Naive thymus-derived CD4-positive, alpha-beta T cell (primary cell): ENCODE measurements at regions of chr15 and their contacts with region 1.

Region 1: DNA sequence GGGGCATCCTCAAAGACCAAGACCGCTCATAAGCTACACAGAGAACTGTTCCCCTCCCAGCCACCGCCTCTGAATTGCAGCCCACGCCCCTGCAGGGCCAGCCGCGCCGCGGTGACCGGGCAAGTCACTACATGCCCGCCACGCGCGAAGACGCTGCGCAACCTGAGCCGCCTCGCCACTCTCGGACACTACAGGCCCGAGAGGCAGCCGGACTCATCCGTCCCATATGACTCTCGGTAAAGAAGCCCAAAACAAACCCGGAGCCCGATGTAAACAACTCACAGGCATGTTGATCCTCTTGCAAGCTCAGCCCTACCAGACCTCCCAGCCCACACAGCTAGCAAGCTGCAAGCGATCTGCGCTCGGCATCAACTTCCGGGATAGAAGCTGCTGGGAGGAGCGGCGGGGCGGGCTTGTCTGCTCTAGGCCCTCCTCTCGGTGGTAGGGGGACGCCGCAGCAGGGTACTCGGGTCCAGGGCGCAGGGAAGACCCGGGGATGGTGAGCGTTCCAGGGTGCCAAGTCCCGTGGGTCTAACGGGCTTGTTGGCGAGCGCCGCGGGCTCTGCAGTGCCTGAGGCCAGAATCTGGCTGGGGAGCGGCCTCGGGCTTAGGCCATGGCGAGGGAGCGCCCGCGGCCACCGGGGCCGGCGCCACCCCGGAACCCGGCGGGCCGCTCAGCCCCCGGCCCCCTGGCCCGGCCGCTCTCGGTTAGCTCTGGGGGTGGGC is at the start of gene RPS27L:
- DNase-seq: peak; percentile 72 to 89 (median 84)
- ATAC-seq: peak; percentile 97
- H3K4me3 ChIP-seq: peak within 1 kb of the TSS; percentile 100
- H3K4me3 Mint-ChIP-seq: peak within 1 kb of the TSS; percentile 89 to 100 (median 98)
- H3K27ac ChIP-seq: peak within 1 kb of the TSS; percentile 86
- H3K27ac Mint-ChIP-seq: peak within 1 kb of the TSS; percentile 93 to 99 (median 97)
- H3K4me1 ChIP-seq: peaks cover 10 to 11% of the 10 kb centered on the region in 2 donors
- H3K4me1 Mint-ChIP-seq: peaks cover 4 to 37% (median 25%) of the 10 kb centered on the region in 7 donors
- H3K27me3 ChIP-seq: no peaks in the 10 kb centered on the region
- H3K27me3 Mint-ChIP-seq: no peaks in the 10 kb centered on the region
- total RNA-seq, gene RPS27L: 38.7 to 248 (median 111) TPM

Region 2: DNA sequence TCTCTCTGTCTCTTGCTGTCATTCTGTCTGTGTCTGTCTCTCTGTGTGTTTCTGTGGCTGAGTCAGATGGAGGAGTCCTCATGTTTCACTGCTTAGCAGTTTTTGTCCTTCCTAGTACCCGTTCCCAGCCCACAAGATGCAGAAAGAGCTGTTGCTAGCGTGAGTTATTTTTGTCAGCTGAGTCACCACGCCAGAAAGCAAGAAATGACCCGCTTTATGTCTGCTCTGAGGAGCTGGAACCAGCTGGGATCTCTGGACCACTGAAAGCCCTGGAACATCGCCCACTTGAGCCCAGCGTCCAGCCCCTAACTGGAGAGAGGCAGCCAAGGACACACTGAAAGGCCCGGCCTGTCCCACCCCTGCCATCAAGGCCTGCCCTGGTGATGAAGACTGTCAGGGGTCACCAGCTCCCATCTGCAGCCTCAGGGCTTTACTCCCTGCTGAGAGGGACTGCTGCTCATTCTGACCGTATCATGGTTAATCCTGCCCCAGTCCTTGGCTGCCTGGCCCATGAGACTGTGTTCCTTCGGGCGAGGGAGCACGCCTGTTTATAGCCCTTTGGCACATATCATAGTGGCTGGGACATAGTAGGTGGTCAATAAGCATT is 216.4 kb before region 1 on chr15:
- CTCF ChIA-PET with region 1: no interaction called
- POLR2A ChIA-PET with region 1: no interaction called
- intact Hi-C with region 1: no loop called
- DNase-seq: no peak
- ATAC-seq: peak; percentile 31
- H3K4me3 ChIP-seq: no peak overlapping the region
- H3K4me3 Mint-ChIP-seq: no peak overlapping the region
- H3K27ac ChIP-seq: no peak overlapping the region
- H3K27ac Mint-ChIP-seq: no peak overlapping the region
- H3K4me1 ChIP-seq: no peaks in the 10 kb centered on the region
- H3K4me1 Mint-ChIP-seq: peaks cover 0 to 2% (median 0%) of the 10 kb centered on the region in 7 donors
- H3K27me3 ChIP-seq: no peaks in the 10 kb centered on the region
- H3K27me3 Mint-ChIP-seq: peaks cover 11 to 53% (median 31%) of the 10 kb centered on the region in 5 donors

Region 3: GRCh38 chr15:63006032-63006878 is 151.0 kb before region 1 on chr15:
- CTCF ChIA-PET with region 1: no interaction called
- POLR2A ChIA-PET with region 1: no interaction called
- intact Hi-C with region 1: no loop called
- DNase-seq: no peak
- ATAC-seq: no peak
- H3K4me3 ChIP-seq: no peak overlapping the region
- H3K4me3 Mint-ChIP-seq: no peak overlapping the region
- H3K27ac ChIP-seq: no peak overlapping the region
- H3K27ac Mint-ChIP-seq: peak overlapping the region in 1 of 9 donors; percentile 12
- H3K4me1 ChIP-seq: no peaks in the 10 kb centered on the region
- H3K4me1 Mint-ChIP-seq: no peaks in the 10 kb centered on the region
- H3K27me3 ChIP-seq: no peaks in the 10 kb centered on the region
- H3K27me3 Mint-ChIP-seq: peaks cover 0 to 7% (median 0%) of the 10 kb centered on the region in 5 donors

Region 4: DNA sequence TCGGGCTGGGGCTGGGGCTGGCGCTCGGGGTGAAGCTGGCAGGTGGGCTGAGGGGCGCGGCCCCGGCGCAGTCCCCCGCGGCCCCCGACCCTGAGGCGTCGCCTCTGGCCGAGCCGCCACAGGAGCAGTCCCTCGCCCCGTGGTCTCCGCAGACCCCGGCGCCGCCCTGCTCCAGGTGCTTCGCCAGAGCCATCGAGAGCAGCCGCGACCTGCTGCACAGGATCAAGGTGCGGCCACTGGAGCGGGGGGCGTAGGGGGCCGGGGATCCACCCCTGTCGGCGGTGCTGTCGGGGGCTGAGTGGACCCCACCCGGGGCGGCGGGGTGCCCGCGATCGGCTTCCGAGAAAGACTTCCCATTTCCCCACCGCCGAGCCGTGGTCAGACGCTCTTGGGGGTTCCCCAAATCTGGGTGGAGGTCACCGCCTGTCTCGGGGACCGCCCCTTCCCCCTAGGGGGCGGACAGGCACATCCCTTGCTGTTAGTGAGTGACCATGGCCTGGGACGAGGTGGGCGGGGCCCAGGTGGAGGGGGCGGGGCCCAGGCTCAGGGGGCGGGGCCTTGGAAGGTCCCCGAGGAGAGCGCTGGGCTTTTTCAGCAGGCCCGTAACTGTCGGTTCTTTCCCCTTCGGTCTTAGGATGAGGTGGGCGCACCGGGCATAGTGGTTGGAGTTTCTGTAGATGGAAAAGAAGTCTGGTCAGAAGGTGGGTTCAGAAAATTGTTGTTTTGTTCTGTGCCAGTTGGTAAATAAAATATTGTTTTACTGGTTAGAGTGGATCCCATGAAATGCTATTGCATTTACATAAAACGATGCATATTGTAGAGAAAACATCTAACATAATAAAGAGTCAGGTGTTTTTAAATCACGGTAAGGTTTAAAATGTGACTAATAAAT is 35.0 kb before region 1 on chr15:
- CTCF ChIA-PET with region 1: no interaction called
- POLR2A ChIA-PET with region 1: interaction called, 3 read pairs
- intact Hi-C with region 1: loop called (anchors 1 kb)
- DNase-seq: peak; percentile 38 to 91 (median 57)
- ATAC-seq: peak; percentile 95
- H3K4me3 ChIP-seq: peak overlapping the region; percentile 75
- H3K4me3 Mint-ChIP-seq: peak overlapping the region; percentile 80 to 95 (median 92)
- H3K27ac ChIP-seq: peak overlapping the region; percentile 80
- H3K27ac Mint-ChIP-seq: peak overlapping the region; percentile 54 to 95 (median 79)
- H3K4me1 ChIP-seq: peaks cover 4 to 8% of the 10 kb centered on the region in 2 donors
- H3K4me1 Mint-ChIP-seq: peaks cover 9 to 29% (median 18%) of the 10 kb centered on the region in 7 donors
- H3K27me3 ChIP-seq: no peaks in the 10 kb centered on the region
- H3K27me3 Mint-ChIP-seq: no peaks in the 10 kb centered on the region

Region 5: GRCh38 chr15:63232405-63232804 is 75.1 kb after region 1 on chr15:
- CTCF ChIA-PET with region 1: interaction called, 4 read pairs
- POLR2A ChIA-PET with region 1: interaction called, 8 read pairs
- intact Hi-C with region 1: loop called (anchors 1 to 5 kb)
- DNase-seq: peak in 7 of 9 donors; percentile 21 to 55 (median 40)
- ATAC-seq: peak; percentile 78
- H3K4me3 ChIP-seq: no peak overlapping the region
- H3K4me3 Mint-ChIP-seq: peak overlapping the region in 9 of 10 donors; percentile 1 to 73 (median 59)
- H3K27ac ChIP-seq: peak overlapping the region; percentile 52
- H3K27ac Mint-ChIP-seq: peak overlapping the region; percentile 70 to 92 (median 86)
- H3K4me1 ChIP-seq: peaks cover 13 to 32% of the 10 kb centered on the region in 2 donors
- H3K4me1 Mint-ChIP-seq: peaks cover 22 to 91% (median 86%) of the 10 kb centered on the region in 7 donors
- H3K27me3 ChIP-seq: no peaks in the 10 kb centered on the region
- H3K27me3 Mint-ChIP-seq: no peaks in the 10 kb centered on the region

Region 6: GRCh38 chr15:63277038-63277892 is 120.0 kb after region 1 on chr15 and contains the start of gene APH1B:
- CTCF ChIA-PET with region 1: interaction called, 3 read pairs
- POLR2A ChIA-PET with region 1: interaction called, 28 read pairs
- intact Hi-C with region 1: loop called (anchors 1 kb)
- DNase-seq: peak; percentile 62 to 80 (median 74)
- ATAC-seq: peak; percentile 92
- H3K4me3 ChIP-seq: peak within 1 kb of the TSS; percentile 71
- H3K4me3 Mint-ChIP-seq: peak within 1 kb of the TSS; percentile 78 to 93 (median 89)
- H3K27ac ChIP-seq: peak within 1 kb of the TSS; percentile 96
- H3K27ac Mint-ChIP-seq: peak within 1 kb of the TSS; percentile 75 to 98 (median 86)
- H3K4me1 ChIP-seq: peaks cover 10 to 21% of the 10 kb centered on the region in 2 donors
- H3K4me1 Mint-ChIP-seq: peaks cover 23 to 49% (median 46%) of the 10 kb centered on the region in 7 donors
- H3K27me3 ChIP-seq: no peaks in the 10 kb centered on the region
- H3K27me3 Mint-ChIP-seq: no peaks in the 10 kb centered on the region
- total RNA-seq, gene APH1B: 9.9 to 29.9 (median 17.6) TPM

Region 7: GRCh38 chr15:63296195-63296594 is 138.9 kb after region 1 on chr15:
- CTCF ChIA-PET with region 1: no interaction called
- POLR2A ChIA-PET with region 1: no interaction called
- intact Hi-C with region 1: no loop called
- DNase-seq: no peak
- ATAC-seq: no peak
- H3K4me3 ChIP-seq: no peak overlapping the region
- H3K4me3 Mint-ChIP-seq: no peak overlapping the region
- H3K27ac ChIP-seq: no peak overlapping the region
- H3K27ac Mint-ChIP-seq: no peak overlapping the region
- H3K4me1 ChIP-seq: no peaks in the 10 kb centered on the region
- H3K4me1 Mint-ChIP-seq: peaks cover 0 to 14% (median 13%) of the 10 kb centered on the region in 7 donors
- H3K27me3 ChIP-seq: no peaks in the 10 kb centered on the region
- H3K27me3 Mint-ChIP-seq: no peaks in the 10 kb centered on the region